ENCODE measurements at regions of chr1 and their contacts with region 1.

Region 1: DNA sequence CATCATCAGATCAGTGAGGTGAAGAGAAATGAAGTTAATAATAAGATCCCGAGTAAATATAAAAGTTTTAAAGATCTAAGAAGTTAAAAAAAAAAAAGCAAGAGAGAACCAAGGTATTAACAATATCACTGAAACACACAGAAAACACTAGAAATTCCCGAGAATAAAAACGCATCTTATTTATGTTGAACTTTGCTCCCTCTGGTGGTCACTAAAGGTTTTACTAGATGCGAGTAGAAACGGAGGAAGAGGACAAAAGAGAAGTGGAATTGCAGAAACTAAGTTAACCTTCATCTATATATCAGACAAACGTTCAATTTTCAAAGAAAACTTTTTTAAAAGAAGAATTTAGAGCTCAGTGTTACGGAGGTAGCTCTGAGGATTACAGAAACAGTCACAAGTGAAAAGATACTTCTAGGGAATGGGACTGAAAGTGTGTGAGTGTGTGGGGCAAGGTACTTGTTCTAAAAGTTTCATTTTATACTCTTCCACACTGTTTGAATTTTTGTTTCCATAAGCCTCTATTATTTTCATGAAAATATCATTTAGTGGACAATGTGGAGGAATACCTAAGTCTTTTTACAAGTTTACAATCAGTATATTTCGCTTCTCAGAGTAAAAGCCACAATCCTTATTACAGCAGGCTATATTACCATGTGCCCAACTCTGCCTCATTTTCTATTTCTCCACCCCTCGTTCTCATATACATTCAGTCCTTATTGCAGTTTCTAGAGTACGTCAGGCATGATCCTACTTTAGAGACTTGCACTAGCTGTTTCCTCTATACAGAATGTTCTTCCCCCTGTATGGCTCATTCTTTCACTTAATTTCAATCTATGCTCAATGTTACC is 19.7 kb downstream of the ACBD6 start:
- DNase-seq: peak in 6 of 9 donors; percentile 12 to 44 (median 36)
- ATAC-seq: peak; percentile 63
- H3K4me3 ChIP-seq: no peak overlapping the region
- H3K4me3 Mint-ChIP-seq: peak overlapping the region in 7 of 10 donors; percentile 20 to 63 (median 35)
- H3K27ac ChIP-seq: no peak overlapping the region
- H3K27ac Mint-ChIP-seq: peak overlapping the region in 1 of 9 donors; percentile 6
- H3K4me1 ChIP-seq: peaks cover 0 to 6% of the 10 kb centered on the region in 2 donors
- H3K4me1 Mint-ChIP-seq: peaks cover 7 to 32% (median 17%) of the 10 kb centered on the region in 7 donors
- H3K27me3 ChIP-seq: no peaks in the 10 kb centered on the region
- H3K27me3 Mint-ChIP-seq: no peaks in the 10 kb centered on the region

Region 2: GRCh38 chr1:179706339-179706941 is 776.2 kb before region 1 on chr1:
- CTCF ChIA-PET with region 1: no interaction called
- POLR2A ChIA-PET with region 1: no interaction called
- intact Hi-C with region 1: loop called (anchors 1 to 10 kb)
- DNase-seq: peak; percentile 27 to 78 (median 68)
- ATAC-seq: peak; percentile 33
- H3K4me3 ChIP-seq: no peak overlapping the region
- H3K4me3 Mint-ChIP-seq: no peak overlapping the region
- H3K27ac ChIP-seq: no peak overlapping the region
- H3K27ac Mint-ChIP-seq: peak overlapping the region in 6 of 9 donors; percentile 13 to 87 (median 72)
- H3K4me1 ChIP-seq: peaks cover 0 to 15% of the 10 kb centered on the region in 2 donors
- H3K4me1 Mint-ChIP-seq: peaks cover 6 to 25% (median 14%) of the 10 kb centered on the region in 7 donors
- H3K27me3 ChIP-seq: no peaks in the 10 kb centered on the region
- H3K27me3 Mint-ChIP-seq: peaks cover 0 to 6% (median 0%) of the 10 kb centered on the region in 5 donors

Region 3: DNA sequence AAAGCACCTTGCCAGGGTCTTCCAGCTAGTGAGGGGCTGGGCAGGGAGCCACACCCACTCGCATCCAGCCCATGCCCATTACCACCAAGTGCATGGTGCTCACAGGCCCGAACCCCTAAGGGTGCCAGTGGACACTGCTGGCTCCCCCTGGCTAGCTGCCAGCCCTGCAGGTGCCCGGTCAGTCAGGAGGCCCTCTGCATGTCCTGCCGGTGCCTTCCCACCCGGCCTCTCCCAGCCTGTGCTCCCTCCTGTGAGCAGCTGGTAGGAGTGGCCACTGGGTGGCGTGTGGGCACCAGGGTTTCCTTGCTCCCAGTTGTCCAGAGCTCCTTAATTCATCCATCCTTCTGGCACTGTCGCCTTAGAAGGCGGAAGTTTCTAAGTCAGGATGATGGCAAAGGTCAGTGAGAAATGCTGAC is 294.6 kb before region 1 on chr1:
- CTCF ChIA-PET with region 1: interaction called, 4 read pairs
- POLR2A ChIA-PET with region 1: no interaction called
- intact Hi-C with region 1: loop called in 1 of 2 experiments (anchors 1 kb)
- DNase-seq: no peak
- ATAC-seq: no peak
- H3K4me3 ChIP-seq: no peak overlapping the region
- H3K4me3 Mint-ChIP-seq: no peak overlapping the region
- H3K27ac ChIP-seq: no peak overlapping the region
- H3K27ac Mint-ChIP-seq: no peak overlapping the region
- H3K4me1 ChIP-seq: peaks cover 0 to 26% of the 10 kb centered on the region in 2 donors
- H3K4me1 Mint-ChIP-seq: peaks cover 0 to 11% (median 0%) of the 10 kb centered on the region in 7 donors
- H3K27me3 ChIP-seq: no peaks in the 10 kb centered on the region
- H3K27me3 Mint-ChIP-seq: no peaks in the 10 kb centered on the region

Region 4: GRCh38 chr1:180252638-180253536 is 229.8 kb before region 1 on chr1:
- CTCF ChIA-PET with region 1: interaction called, 10 read pairs
- POLR2A ChIA-PET with region 1: no interaction called
- intact Hi-C with region 1: loop called (anchors 1 kb)
- DNase-seq: peak in 8 of 9 donors; percentile 35 to 75 (median 46)
- ATAC-seq: peak; percentile 79
- H3K4me3 ChIP-seq: no peak overlapping the region
- H3K4me3 Mint-ChIP-seq: no peak overlapping the region
- H3K27ac ChIP-seq: no peak overlapping the region
- H3K27ac Mint-ChIP-seq: no peak overlapping the region
- H3K4me1 ChIP-seq: no peaks in the 10 kb centered on the region
- H3K4me1 Mint-ChIP-seq: peaks cover 0 to 2% (median 0%) of the 10 kb centered on the region in 7 donors
- H3K27me3 ChIP-seq: peaks cover 0 to 6% of the 10 kb centered on the region in 2 donors
- H3K27me3 Mint-ChIP-seq: peaks cover 2 to 64% (median 51%) of the 10 kb centered on the region in 5 donors

Region 5: DNA sequence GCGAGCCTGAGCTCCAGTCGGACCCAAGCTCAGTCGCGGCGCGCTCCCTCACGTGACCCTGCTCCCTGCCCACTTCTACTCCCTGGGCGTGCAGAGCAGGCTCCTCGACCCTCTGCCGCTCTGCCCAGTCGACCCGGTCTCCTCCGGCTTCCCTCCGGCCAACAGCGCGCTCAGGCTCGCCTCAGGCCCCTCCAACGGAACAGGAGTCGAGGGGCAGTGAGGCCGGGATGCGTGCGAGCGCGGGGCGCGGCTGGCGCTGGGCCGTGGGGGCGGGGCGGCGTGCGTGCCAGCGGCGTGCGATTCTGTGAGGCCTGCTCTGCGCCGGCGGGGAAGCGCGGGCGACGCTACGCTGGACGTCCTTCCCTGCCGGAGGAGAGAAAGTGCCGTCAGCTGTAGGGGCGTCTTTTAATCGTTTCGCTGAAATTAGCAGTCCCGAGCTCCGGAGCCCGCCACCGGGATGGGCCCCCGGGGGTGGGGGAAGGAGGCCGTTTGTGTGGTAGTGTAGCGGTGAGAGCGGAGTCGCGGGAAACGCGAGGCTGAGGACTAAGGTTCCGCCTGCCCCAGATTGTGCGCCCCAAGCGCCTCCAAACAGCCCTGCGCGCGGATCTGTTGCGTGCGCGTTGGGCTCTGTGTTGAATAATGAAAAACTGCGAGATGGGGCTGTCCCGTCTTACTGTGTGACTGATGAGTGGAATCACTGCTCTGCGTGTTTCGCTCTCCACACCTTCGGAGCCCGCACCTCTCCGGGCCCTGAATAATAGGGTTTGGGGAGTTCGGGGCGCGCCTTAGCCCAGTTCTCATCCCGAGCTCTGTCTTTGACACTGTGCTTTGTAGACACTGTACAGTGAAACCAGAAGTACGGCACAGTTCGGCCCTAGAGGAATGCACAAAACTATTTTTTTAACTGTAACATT is 20.0 kb after region 1 on chr1 and contains the start of gene ACBD6:
- CTCF ChIA-PET with region 1: interaction called, 7 read pairs
- POLR2A ChIA-PET with region 1: interaction called, 3 read pairs
- intact Hi-C with region 1: loop called in 1 of 2 experiments (anchors 2 kb)
- DNase-seq: peak; percentile 80 to 92 (median 89)
- ATAC-seq: peak; percentile 95
- H3K4me3 ChIP-seq: peak within 1 kb of the TSS; percentile 85
- H3K4me3 Mint-ChIP-seq: peak within 1 kb of the TSS; percentile 89 to 100 (median 97)
- H3K27ac ChIP-seq: peak within 1 kb of the TSS; percentile 79
- H3K27ac Mint-ChIP-seq: peak within 1 kb of the TSS; percentile 91 to 99 (median 98)
- H3K4me1 ChIP-seq: peaks cover 10 to 18% of the 10 kb centered on the region in 2 donors
- H3K4me1 Mint-ChIP-seq: peaks cover 17 to 55% (median 38%) of the 10 kb centered on the region in 7 donors
- H3K27me3 ChIP-seq: no peaks in the 10 kb centered on the region
- H3K27me3 Mint-ChIP-seq: peaks cover 0 to 5% (median 0%) of the 10 kb centered on the region in 5 donors
- total RNA-seq, gene ACBD6: 44.2 to 75.7 (median 47.3) TPM